Prostate gland (tissue), 2 donors: ENCODE measurements at regions of chr3 and their contacts with region 1.

Region 1: DNA sequence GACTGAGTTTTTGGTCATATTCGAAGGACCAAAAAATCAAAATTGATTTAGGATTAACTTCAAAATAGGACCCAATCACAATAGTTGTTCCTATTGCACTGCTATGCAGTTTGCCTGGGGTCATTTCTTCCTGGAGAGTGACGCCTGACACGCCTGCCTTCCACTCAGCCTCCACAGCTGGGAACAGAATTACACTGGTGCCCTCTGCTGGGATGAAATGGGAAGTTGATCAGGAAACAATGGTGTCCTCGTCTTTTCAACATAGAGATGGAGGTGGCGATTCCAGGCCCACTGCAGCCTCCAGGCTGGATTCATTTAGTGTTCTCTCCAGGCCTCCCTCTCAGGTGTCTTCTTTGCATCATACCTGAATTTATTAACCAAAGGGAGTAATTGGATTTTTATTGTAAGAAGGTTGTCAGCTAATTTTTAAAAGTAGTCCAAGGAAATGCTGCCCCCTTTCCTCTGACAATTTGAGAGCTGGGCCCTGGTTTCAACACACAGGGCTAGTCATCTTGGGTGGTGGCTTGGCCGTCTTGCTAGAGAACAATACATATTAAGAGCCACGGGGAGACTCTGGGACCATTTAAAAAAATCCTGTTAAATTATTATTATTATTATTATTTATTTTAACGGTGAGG is 69.7 kb downstream of the GAP43 start:
- DNase-seq: peak; percentile 54
- H3K4me3 ChIP-seq: no peak overlapping the region
- H3K27ac ChIP-seq: no peak overlapping the region
- H3K4me1 ChIP-seq: no peaks in the 10 kb centered on the region
- H3K27me3 ChIP-seq: no peaks in the 10 kb centered on the region
- CTCF ChIP-seq: peak; percentile 47 to 75 (median 68)
- POLR2A ChIP-seq: no peak

Region 2: GRCh38 chr3:114721864-114722263 is 971.1 kb before region 1 on chr3:
- intact Hi-C with region 1: no loop called
- DNase-seq: no peak
- H3K4me3 ChIP-seq: no peak overlapping the region
- H3K27ac ChIP-seq: no peak overlapping the region
- H3K4me1 ChIP-seq: no peaks in the 10 kb centered on the region
- H3K27me3 ChIP-seq: no peaks in the 10 kb centered on the region
- CTCF ChIP-seq: no peak
- POLR2A ChIP-seq: no peak

Region 3: DNA sequence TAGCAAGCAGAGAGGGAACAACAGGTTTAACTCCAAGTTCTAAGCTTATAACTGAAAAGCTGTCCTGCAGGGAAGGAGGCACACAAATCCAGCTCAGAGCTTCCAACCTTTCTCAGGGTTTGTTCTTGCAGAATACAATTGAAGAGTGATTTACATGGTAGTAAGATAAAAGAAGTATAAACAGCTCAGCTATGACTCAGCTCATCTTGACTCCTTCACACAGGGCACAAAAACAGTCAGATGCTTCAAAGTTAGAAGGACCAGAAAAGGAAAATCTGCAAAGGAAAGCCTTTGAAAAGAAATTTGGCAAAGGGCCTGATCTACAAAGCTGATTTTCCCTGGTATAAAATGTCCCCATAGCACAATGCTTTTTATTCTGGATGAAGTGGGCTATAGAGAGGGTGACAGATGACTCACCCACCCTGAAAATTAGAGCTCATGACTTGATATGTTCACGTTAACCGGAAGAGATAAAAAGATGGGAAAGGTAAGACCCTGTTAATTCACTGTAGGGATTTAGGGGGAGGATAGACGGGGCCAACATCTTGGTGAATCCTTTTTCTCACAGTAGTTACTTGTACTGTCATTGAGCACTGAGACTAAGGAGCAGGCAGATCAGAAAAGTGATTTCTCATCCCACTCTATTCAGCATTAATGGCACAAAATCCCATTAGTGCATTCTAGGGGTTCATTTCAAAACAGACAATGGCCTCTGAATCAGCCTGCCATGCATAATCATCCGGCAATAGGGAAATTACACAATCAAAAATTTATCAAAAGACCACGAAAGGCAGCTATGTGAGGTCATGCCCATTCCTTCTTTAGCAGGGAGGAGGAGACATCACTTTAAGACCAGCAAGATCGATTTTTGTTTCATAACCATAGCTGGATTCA is 73.8 kb after region 1 on chr3:
- intact Hi-C with region 1: loop called (anchors 2 kb)
- DNase-seq: no peak
- H3K4me3 ChIP-seq: no peak overlapping the region
- H3K27ac ChIP-seq: no peak overlapping the region
- H3K4me1 ChIP-seq: no peaks in the 10 kb centered on the region
- H3K27me3 ChIP-seq: no peaks in the 10 kb centered on the region
- CTCF ChIP-seq: no peak
- POLR2A ChIP-seq: no peak

Region 4: GRCh38 chr3:115783938-115784738 is 91.1 kb after region 1 on chr3:
- intact Hi-C with region 1: loop called (anchors 5 kb)
- DNase-seq: peak; percentile 83
- H3K4me3 ChIP-seq: peak overlapping the region; percentile 62 to 70
- H3K27ac ChIP-seq: peak overlapping the region; percentile 87 to 91
- H3K4me1 ChIP-seq: no peaks in the 10 kb centered on the region
- H3K27me3 ChIP-seq: no peaks in the 10 kb centered on the region
- CTCF ChIP-seq: peak; percentile 94 to 98 (median 95)
- POLR2A ChIP-seq: peak; percentile 41